A549 (cell line): ENCODE measurements at regions of chr7 and their contacts with region 1.

Region 1: GRCh38 chr7:80134536-80135320 is at the start of gene GNAI1:
- DNase-seq: peak; percentile 58 to 78
- ATAC-seq: peak; percentile 82 to 86
- H3K4me3 ChIP-seq: peak within 1 kb of the TSS; percentile 82
- H3K27ac ChIP-seq: peak within 1 kb of the TSS; percentile 90 to 92
- H3K4me1 ChIP-seq: peaks cover 39% of the 10 kb centered on the region
- CTCF ChIP-seq: peak; percentile 86
- EP300 ChIP-seq: no peak
- POLR2A ChIP-seq: peak; percentile 77
- RAD21 ChIP-seq: peak; percentile 61 to 92
- polyA plus RNA-seq, gene GNAI1: 59.7 and 96.3 TPM in 2 replicates

Region 2: DNA sequence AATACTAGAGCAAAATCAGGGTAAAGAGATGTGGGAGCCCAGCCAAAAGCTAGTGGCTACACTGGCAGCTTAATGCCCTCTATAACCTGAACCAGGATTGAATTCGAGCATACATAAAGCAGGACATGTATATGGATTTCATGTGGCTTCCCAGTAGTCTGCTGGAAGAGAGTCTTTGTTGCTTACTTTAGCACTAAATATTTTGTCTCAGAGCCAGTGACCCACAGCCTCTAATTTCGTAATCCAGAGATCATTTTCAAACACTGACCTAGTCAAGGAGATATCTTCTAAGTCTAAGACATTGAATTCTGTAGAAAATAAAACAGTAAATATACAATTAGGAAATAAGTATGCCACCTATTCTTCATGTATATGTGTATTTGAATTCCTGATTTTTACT is 64.3 kb before region 1 on chr7:
- CTCF ChIA-PET with region 1: no interaction called
- POLR2A ChIA-PET with region 1: no interaction called
- DNase-seq: no peak
- ATAC-seq: no peak
- H3K4me3 ChIP-seq: no peak overlapping the region
- H3K27ac ChIP-seq: no peak overlapping the region
- H3K4me1 ChIP-seq: no peaks in the 10 kb centered on the region
- CTCF ChIP-seq: no peak
- EP300 ChIP-seq: no peak
- POLR2A ChIP-seq: no peak
- RAD21 ChIP-seq: no peak

Region 3: DNA sequence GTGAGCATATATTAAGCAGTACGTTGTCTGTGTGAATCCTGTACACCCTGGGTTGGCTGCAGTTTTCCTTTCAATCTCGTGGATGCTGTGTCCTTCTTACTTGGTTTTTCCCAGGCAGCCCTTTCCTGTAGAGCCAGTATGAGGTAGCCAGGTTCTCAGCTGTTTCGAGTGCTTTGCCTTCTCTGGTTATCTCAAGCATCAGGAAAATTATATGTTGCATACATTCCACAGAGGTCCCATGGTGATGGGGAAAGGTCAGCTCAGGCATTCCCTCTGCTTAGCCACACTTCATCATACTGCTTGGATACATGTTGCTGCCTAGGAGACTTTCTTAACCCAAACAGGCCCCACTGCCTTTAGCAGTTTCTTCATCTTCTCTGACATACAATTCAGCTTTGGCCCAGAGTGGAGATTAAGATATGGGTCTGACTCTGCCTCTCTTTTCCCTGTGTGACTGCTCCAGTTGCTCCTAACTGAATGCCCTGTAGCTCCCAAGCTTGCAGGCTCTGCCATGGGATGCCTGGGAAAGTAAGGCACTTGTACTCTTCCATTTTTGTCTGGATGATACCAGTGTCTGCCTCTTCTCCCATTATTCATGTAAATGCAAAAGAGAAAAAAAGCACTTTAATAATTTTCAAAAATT is 11.2 kb after region 1 on chr7:
- CTCF ChIA-PET with region 1: interaction called, 39 read pairs
- POLR2A ChIA-PET with region 1: interaction called, 7 read pairs
- DNase-seq: peak in 1 of 2 experiments; percentile 28
- ATAC-seq: peak; percentile 71 to 84
- H3K4me3 ChIP-seq: peak overlapping the region; percentile 8; the same call in 1 of the 3 replicates
- H3K27ac ChIP-seq: peak overlapping the region; percentile 62 to 84
- H3K4me1 ChIP-seq: peaks cover 85% of the 10 kb centered on the region
- CTCF ChIP-seq: no peak
- EP300 ChIP-seq: no peak
- POLR2A ChIP-seq: no peak
- RAD21 ChIP-seq: no peak

Region 4: GRCh38 chr7:80213814-80214213 is 79.1 kb after region 1 on chr7:
- CTCF ChIA-PET with region 1: interaction called, 11 read pairs
- POLR2A ChIA-PET with region 1: interaction called, 3 read pairs
- DNase-seq: no peak
- ATAC-seq: no peak
- H3K4me3 ChIP-seq: no peak overlapping the region
- H3K27ac ChIP-seq: no peak overlapping the region
- H3K4me1 ChIP-seq: peaks cover 40% of the 10 kb centered on the region
- CTCF ChIP-seq: no peak
- EP300 ChIP-seq: no peak
- POLR2A ChIP-seq: no peak
- RAD21 ChIP-seq: no peak

Region 5: DNA sequence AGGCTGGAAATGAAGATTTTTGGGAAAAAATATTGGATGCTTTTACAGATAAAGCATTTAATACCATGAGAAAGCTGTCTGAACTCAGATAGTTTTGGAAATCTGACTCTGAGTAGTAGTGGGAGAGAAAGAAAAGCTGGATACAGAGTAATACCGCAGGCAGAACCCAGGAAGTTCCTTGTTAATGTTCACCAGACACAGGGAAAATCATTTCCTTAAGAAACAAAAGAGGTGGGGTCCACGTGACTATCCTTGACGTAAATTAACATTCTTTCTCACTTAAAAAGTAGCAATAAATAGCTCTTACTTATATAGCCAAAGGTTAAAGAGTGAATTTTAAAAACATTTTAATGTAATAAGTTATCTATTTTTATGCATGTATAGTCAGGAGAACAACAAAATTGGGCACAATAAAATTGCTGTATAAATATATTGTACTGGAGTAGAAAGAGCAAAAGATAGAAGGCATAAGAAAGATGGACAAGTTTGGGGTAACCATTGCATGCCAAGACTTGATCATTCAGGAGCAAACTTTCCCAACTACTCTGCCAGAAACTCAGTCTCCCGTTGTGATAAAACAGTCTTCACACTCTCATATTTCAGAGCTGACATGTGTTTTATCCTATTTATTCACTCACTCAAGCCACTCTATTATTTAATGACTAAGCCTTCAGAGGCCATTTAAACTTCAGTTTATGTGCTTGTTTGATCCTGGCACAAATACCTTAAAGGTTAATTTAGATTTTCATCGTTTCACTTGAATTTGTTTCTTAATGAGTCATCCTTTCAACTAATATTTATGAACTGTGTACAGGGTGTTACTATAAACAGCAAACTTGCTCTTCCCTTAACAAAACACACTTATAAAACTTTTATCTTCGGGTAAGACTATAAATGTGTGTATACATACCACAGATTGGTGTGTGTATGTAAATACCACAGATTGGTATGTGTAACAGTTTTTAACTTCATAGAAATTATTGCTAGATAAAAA is 143.0 kb after region 1 on chr7:
- CTCF ChIA-PET with region 1: interaction called, 6 read pairs
- POLR2A ChIA-PET with region 1: interaction called, 10 read pairs
- DNase-seq: peak; percentile 69 to 94
- ATAC-seq: peak; percentile 90
- H3K4me3 ChIP-seq: peak overlapping the region; percentile 19; the same call in 2 of the 3 replicates
- H3K27ac ChIP-seq: peak overlapping the region; percentile 72 to 84
- H3K4me1 ChIP-seq: peaks cover 44% of the 10 kb centered on the region
- CTCF ChIP-seq: no peak
- EP300 ChIP-seq: peak; percentile 40 to 47; a peak in 2 of 5 replicates
- POLR2A ChIP-seq: no peak
- RAD21 ChIP-seq: no peak; a peak in 1 of 5 replicates

Region 6: DNA sequence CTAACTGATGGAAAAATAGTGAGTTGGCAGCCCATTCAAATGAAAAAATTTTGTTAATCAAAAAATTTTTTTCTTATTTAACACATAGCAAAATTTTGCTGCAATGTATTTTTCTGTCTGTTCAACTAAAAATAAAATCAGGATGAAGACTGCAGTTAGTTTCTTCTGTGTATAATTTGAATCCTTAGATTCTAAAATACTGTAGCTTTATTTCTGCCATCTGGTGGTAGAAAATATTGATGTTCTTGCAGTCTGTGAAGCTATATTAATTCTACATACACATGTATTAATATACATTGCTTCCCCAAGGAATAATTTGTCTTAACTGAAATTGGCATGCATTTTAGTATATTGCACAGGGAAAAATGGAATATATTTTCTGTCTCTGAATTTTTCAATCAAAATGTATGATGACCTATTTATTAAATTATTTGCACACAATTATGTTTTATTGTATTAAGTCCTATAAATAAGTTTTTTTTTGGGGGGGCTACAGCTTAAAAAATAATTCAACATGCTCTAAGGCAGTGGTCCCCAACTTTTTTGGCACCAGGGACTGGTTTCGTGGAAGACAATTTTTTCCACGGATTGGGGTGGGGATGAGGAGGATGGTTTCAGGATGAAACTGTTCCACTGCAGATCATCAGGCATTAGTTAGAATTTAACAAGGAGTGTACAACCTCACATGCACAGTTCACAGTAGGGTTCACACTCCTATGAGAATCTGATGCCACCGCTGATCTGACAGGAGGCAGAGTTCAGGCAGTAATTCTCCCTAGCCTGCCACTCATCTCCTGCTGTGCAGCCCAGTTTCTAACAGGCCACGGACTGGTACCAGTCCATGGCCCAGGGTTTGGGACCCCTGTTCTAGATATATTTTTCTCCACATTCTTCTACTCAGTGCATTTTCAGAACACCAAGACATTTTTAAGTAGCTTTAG is 257.8 kb after region 1 on chr7:
- CTCF ChIA-PET with region 1: interaction called, 37 read pairs
- POLR2A ChIA-PET with region 1: interaction called, 4 read pairs
- DNase-seq: peak; percentile 3 to 36
- ATAC-seq: peak in 1 of 2 experiments; percentile 61; a peak in 3 of 6 replicates
- H3K4me3 ChIP-seq: no peak overlapping the region
- H3K27ac ChIP-seq: no peak overlapping the region
- H3K4me1 ChIP-seq: no peaks in the 10 kb centered on the region
- CTCF ChIP-seq: peak; percentile 70
- EP300 ChIP-seq: no peak
- POLR2A ChIP-seq: no peak
- RAD21 ChIP-seq: peak; percentile 70 to 77

Region 7: GRCh38 chr7:80450621-80451308 is 316.0 kb after region 1 on chr7:
- CTCF ChIA-PET with region 1: interaction called, 12 read pairs
- POLR2A ChIA-PET with region 1: no interaction called
- DNase-seq: peak in 1 of 2 experiments; percentile 25
- ATAC-seq: no peak; a peak in 2 of 6 replicates
- H3K4me3 ChIP-seq: no peak overlapping the region
- H3K27ac ChIP-seq: peak overlapping the region; percentile 27 to 57; a peak in 5 of 6 replicates
- H3K4me1 ChIP-seq: peaks cover 16% of the 10 kb centered on the region
- CTCF ChIP-seq: no peak
- EP300 ChIP-seq: no peak
- POLR2A ChIP-seq: no peak
- RAD21 ChIP-seq: no peak